ENCODE measurements at regions of chr12 and their contacts with region 1.

Region 1: GRCh38 chr12:5428332-5429221 is 3.3 kb upstream of the NTF3 start:
- DNase-seq: no peak
- H3K4me3 ChIP-seq: no peak overlapping the region
- H3K27me3 ChIP-seq: peaks cover 23% of the 10 kb centered on the region
- CTCF ChIP-seq: peak; percentile 64

Region 2: GRCh38 chr12:5096241-5096935 is 332.2 kb before region 1 on chr12:
- CTCF ChIA-PET with region 1: interaction called, 12 read pairs
- POLR2A ChIA-PET with region 1: no interaction called
- DNase-seq: peak; percentile 62
- H3K4me3 ChIP-seq: no peak overlapping the region
- H3K27me3 ChIP-seq: no peaks in the 10 kb centered on the region
- CTCF ChIP-seq: peak; percentile 34; the same call in 1 of the 2 replicates

Region 3: DNA sequence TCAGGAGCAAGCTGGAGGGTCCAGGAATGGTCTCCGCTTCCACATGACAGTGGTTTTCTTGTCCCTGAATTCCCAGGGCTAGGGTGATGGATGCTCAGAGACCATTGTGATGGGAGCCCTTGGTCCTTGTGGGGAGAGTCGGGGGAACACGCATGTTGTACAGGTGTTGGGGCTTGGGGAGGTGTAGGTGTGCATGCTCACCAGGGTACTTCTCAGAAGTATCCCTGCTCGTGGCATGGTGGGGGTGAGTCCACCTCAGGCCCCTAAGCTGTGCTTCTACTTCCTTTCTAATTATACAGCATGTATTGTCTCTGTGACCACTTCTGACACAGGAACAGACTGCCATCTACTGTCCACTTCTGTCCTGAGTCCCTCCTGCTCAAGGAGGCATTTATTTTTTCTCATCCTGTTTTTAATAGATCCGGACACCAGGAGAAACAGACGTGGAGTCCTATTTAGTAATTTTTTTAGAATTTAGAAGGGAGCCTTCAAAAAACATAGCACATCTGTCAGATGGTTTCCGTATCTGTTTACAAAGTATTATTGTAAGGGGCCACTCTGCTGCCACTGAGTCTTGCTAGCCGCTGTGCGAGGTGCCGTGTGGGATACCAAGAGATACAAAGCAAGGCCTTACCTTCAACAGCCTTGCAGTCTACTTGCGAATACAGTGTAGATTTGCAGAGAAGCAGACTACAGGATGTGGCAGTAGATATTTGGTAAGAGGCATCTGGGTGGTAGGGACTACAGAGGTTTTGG is 13.9 kb after region 1 on chr12:
- CTCF ChIA-PET with region 1: interaction called, 27 read pairs
- POLR2A ChIA-PET with region 1: no interaction called
- DNase-seq: no peak
- H3K4me3 ChIP-seq: no peak overlapping the region
- H3K27me3 ChIP-seq: no peaks in the 10 kb centered on the region
- CTCF ChIP-seq: peak; percentile 71

Region 4: DNA sequence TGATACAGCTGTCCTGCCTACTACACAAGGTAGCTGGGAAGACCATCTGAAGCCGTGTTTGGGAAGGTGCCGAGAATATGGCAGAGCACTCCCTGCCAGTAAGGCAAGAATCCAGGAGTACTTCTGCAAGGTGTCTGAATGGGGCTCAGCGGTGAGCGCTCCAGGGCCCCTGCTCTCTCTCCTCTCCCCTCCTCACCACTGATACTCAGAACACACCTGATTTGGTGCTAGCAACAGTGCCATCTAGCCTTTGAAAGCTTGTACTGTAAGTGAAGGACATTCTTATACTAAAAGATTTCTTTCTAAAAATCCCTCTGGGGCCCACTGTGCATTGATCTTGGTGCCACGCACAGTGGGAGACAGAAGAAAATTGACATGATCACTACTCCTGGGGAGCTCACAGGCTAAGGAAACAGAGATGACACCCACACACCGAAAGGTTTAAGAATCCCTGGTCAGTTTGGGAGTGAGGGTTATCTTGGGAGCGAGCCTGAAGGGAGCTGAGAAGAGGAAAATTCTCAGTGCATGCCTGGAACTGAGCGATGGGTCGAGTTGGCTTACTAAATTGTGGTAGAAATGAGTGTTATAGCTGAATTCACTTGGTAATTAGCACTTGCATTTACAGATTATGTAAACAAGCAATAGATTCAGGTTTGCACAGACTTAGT is 220.2 kb after region 1 on chr12:
- CTCF ChIA-PET with region 1: interaction called, 69 read pairs
- POLR2A ChIA-PET with region 1: interaction called, 8 read pairs
- DNase-seq: no peak
- H3K4me3 ChIP-seq: no peak overlapping the region
- H3K27me3 ChIP-seq: peaks cover 2% of the 10 kb centered on the region; the same call in 1 of the 2 replicates
- CTCF ChIP-seq: peak; percentile 64

Region 5: DNA sequence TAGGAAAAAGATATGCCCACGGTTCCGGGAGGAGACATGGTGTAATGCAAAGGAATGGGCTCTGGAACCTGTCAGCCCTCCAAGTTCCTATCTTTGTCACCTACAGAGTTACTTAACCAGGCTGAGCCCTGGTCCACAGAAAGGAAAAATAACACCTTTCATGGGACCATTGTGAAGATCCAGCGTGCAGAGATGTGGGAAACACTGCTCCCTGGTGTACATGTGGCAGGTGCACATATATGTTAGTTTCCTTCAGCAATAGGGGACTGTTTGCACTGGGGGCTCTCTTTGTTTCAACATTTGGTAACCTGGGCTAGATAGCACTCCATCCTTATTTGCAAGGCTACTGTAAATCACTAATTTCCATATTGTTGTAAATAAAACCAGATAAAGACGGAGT is 444.2 kb after region 1 on chr12:
- CTCF ChIA-PET with region 1: interaction called, 15 read pairs
- POLR2A ChIA-PET with region 1: no interaction called
- DNase-seq: no peak
- H3K4me3 ChIP-seq: no peak overlapping the region
- H3K27me3 ChIP-seq: peaks cover 2% of the 10 kb centered on the region
- CTCF ChIP-seq: peak; percentile 55